Sciatic nerve (tissue), 2 donors: ENCODE measurements at regions of chr13 and their contacts with region 1.

Region 1: GRCh38 chr13:59865398-59865797 is 298.3 kb downstream of the DIAPH3 start:
- DNase-seq: no peak
- ATAC-seq: no peak

Region 2: GRCh38 chr13:59384154-59384553 is 481.2 kb before region 1 on chr13:
- intact Hi-C with region 1: no loop called
- DNase-seq: no peak
- ATAC-seq: no peak

Region 3: GRCh38 chr13:60282186-60282585 is 416.8 kb after region 1 on chr13:
- intact Hi-C with region 1: no loop called
- DNase-seq: no peak
- ATAC-seq: no peak

Region 4: DNA sequence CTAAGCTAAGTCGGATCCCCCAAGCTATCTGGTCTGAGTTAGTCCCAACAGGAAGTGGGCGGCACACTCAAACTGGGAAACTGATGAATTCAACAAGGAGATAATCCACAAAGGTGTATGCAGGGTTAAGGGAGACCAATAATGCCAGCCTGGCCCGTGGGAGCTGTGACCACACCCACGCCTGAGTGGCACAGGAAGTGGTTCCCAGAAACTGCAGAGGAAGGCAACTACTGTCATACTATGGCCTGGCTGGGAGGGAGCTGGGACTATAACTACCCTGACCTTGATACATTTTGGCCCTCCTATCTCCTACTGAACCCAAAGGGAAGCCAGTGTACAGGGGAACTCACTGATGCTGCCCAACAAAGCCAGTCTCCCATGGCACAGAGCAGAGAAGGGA is 446.1 kb after region 1 on chr13:
- intact Hi-C with region 1: loop called (anchors 5 kb)
- DNase-seq: no peak
- ATAC-seq: no peak